Esophagus muscularis mucosa (tissue), 4 donors: ENCODE measurements at regions of chr4 and their contacts with region 1.

Region 1: GRCh38 chr4:174365018-174365587 is 81.4 kb downstream of the CEP44 start:
- DNase-seq: no peak
- H3K4me3 ChIP-seq: no peak overlapping the region
- H3K27ac ChIP-seq: no peak overlapping the region
- H3K4me1 ChIP-seq: peaks cover 0 to 3% (median 0%) of the 10 kb centered on the region in 4 donors
- H3K27me3 ChIP-seq: peaks cover 0 to 2% (median 0%) of the 10 kb centered on the region in 4 donors
- CTCF ChIP-seq: peak; percentile 40 to 56 (median 46)
- EP300 ChIP-seq: no peak
- POLR2A ChIP-seq: no peak

Region 2: DNA sequence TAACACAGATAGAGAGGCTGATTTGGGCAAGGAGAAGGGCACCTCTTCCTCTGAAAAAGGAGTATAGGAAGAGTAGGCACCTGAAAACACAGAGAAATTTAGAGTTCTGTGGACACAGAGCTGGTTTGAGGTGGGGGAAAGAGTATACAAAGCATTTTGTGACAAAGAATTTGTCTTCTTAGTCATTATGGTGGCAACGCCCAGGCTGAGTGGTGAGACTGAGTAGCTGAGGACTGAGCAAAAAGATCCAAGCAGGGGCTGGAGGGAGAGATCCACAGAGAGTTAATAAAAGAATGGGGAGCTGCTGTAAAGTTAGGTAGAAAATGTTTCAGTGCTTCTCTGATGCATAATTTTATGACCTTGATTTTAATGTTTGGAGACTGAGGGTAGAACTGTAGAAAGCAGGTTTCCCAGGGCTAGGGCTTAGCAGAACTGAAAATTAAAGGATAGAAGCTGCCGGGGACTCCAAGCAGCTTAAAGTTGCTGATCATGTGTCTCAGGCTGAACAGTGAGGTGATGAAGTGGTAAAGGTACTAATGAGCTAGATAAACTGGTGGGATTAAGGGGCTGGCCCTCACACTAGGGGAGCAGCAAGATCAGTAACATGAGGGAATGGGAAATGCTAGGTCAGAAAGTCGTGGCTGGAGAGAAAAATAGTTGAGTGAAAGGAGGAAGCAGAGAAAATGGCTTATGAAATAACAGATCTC is 37.5 kb after region 1 on chr4:
- intact Hi-C with region 1: no loop called
- DNase-seq: no peak
- H3K4me3 ChIP-seq: no peak overlapping the region
- H3K27ac ChIP-seq: no peak overlapping the region
- H3K4me1 ChIP-seq: peaks cover 0 to 27% (median 21%) of the 10 kb centered on the region in 4 donors
- H3K27me3 ChIP-seq: no peaks in the 10 kb centered on the region
- CTCF ChIP-seq: no peak
- EP300 ChIP-seq: no peak
- POLR2A ChIP-seq: no peak

Region 3: GRCh38 chr4:174538123-174538875 is 173.2 kb after region 1 on chr4:
- intact Hi-C with region 1: loop called (anchors 10 kb)
- DNase-seq: no peak
- H3K4me3 ChIP-seq: no peak overlapping the region
- H3K27ac ChIP-seq: no peak overlapping the region
- H3K4me1 ChIP-seq: no peaks in the 10 kb centered on the region
- H3K27me3 ChIP-seq: no peaks in the 10 kb centered on the region
- CTCF ChIP-seq: no peak
- EP300 ChIP-seq: no peak
- POLR2A ChIP-seq: no peak

Region 4: DNA sequence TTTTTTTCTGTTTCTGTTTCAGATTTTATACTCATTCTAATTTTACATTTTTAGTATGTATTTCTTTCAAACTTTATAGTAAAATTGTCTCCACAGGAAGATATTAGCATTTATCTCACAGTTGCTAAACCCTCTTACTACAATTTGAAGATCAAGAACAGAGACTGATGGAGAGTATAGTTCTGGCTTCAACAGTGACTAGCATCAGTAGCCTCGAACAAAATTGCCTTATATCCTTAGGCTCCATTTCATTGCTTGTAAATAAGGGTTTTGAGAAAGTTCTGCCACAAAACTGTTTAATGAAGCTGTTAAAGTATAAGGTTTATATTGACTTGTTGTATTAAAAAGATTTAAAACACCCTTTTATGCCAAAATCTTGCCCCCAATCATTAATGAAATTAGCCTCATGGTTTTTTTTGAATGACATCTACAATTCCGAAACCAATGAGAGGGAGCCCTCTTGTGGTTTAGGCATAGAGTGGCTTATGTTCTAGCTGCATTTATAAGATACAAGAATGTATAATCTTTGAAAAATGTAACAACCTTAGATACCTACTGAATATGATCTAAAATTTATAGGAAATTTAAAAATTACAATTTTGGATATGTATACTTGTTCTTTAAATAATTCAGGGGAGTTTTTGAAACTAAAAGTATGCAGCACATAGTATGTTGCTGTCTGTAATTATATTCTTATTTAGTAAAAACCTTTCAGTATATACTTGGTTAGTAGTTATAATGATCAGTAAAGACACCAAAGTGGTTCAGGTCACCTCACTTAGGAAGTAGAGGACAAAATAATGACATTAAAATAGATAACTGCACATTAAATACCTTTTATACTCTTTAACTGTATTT is 267.0 kb after region 1 on chr4:
- intact Hi-C with region 1: loop called (anchors 2 kb)
- DNase-seq: no peak
- H3K4me3 ChIP-seq: no peak overlapping the region
- H3K27ac ChIP-seq: no peak overlapping the region
- H3K4me1 ChIP-seq: peaks cover 0 to 20% (median 12%) of the 10 kb centered on the region in 4 donors
- H3K27me3 ChIP-seq: no peaks in the 10 kb centered on the region
- CTCF ChIP-seq: peak; percentile 73 to 83 (median 81)
- EP300 ChIP-seq: no peak
- POLR2A ChIP-seq: no peak

Region 5: DNA sequence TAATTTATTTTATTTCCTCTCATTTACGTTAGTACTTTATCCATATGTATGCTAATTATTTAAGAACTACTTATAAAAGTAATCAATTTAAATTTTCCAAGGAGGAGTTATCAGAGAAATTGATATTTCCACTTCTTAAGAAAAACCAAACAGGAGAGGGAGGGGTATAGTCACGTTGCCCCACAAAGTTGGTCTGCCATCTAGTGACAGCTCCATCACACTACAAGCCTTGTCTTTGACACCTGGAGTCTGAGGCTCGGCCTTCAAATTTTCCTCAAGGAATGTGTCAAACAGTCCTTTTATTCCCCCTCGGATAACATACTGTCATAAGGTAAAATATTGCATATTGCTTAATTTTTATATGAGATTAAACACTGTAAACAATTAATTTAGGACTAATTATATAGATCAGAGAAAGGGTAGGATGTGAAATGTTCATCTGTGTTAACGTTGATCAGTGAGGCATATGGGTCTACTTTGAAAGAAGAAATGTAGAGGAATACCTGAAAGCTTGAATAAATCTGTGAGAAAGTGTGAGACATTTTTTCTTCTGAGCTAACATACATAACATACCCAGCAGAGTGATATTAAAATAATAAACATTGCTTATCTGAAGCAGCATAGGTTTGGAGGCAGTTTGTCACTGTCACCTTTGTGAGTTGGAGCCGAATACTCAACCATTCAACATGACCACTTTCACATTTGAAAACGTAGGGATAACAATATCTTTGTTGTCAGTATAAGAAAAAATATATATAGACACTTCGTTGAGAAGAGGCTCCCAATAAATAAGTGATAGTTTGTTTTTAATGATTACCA is 349.5 kb after region 1 on chr4:
- intact Hi-C with region 1: loop called (anchors 5 kb)
- DNase-seq: no peak
- H3K4me3 ChIP-seq: no peak overlapping the region
- H3K27ac ChIP-seq: no peak overlapping the region
- H3K4me1 ChIP-seq: no peaks in the 10 kb centered on the region
- H3K27me3 ChIP-seq: no peaks in the 10 kb centered on the region
- CTCF ChIP-seq: peak; percentile 47 to 69 (median 54)
- EP300 ChIP-seq: no peak
- POLR2A ChIP-seq: no peak